Right ventricle myocardium inferior (tissue), 1 donor: ENCODE measurements at regions of chr18 and their contacts with region 1.

Region 1: DNA sequence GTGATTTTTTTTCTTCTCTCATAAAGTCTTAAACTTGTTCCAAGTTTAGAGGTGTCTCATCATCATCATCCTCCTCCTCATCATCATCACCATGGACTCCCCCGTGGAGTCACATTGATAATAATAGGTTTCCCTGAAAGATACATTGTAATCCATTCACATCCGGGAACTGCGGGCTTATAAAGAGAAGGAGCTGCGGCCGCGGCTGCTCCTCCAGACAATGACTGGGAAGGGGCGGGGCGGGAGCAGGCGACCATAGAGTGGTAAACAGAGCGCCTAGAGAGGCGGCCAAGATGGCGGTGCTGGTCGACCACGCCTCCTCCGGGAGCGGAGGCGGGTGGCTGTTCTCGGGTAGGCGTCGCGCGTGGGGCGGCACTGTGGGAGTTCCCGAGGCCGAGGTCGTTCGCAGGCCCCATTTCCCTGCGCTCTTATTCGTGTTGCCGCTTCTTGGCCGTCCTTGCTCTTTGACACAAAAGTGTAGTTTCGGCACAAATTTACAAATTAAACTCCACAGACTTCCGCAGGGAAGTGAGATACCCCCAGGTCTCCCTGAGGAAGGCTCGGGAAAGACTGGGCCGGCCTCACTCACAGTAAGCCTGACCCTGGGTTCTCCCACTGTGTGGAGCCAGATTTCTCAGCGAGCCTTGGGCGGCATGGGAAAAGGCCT is 1.8 kb upstream of the TCF4 start:
- DNase-seq: peak; percentile 99
- ATAC-seq: peak; percentile 98

Region 2: DNA sequence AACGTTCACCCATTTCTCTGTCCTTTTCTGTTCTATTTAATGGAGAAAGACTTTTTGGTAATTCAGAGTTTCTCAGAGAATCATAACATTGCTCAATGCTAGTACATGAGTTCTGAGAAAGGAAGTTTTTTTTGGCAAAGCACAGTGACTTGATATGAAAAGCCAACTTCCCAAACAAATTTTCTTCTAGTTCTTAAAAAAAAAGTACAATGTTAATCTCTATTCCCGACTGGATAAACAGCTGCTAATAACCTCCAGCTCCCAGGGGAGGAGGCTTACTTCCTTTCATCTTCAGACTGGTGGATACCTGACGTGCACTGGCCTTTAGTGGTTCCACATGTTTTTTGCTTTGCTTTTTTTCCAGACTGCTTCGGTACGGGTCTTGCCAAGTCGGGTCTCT is 345.9 kb before region 1 on chr18:
- intact Hi-C with region 1: loop called (anchors 5 kb)
- DNase-seq: no peak
- ATAC-seq: peak; percentile 78

Region 3: GRCh38 chr18:55337908-55338521 is 251.7 kb before region 1 on chr18:
- intact Hi-C with region 1: loop called (anchors 5 kb)
- DNase-seq: no peak
- ATAC-seq: peak; percentile 79

Region 4: GRCh38 chr18:55422456-55423180 is 167.1 kb before region 1 on chr18:
- intact Hi-C with region 1: loop called (anchors 2 kb)
- DNase-seq: no peak
- ATAC-seq: peak; percentile 63

Region 5: DNA sequence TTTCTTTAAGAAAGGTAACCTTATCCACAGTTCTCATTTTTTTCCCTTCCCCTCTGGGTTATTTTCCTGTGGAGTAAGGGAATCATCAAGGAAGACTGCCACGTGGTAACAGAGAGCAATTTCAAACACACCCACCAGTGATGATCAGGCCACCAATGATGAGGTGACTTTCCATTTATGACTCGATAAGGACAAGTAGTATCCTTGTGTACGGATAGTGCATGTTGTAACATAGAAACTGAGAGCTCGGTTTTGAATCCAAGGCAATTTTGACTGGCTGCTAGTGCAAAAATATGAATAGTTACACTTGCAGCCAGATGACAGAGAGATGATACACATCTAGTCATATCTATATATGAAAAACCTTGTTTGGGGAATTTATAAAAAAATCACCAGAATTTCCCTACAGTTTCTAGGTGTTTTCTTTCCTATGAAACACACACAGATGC is 141.9 kb after region 1 on chr18:
- intact Hi-C with region 1: loop called (anchors 5 kb)
- DNase-seq: no peak
- ATAC-seq: no peak

Region 6: DNA sequence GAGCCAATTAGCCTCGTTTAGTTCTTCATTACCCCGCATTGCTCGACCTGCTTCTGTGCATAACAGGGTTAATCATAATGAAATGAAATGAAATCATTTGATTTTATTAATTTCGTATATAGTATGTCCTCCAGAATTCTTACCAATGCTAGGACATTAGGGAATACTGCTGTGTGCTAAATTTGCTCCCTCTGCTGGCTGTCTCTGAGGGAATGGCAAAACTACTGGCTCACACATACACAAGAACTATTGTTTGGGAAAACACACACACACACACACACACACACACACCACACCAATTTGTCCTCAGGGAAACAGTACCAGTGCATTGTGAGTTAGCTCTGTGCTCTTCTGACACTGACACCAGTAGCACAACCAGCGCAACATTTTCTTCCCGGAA is 271.5 kb after region 1 on chr18:
- intact Hi-C with region 1: loop called (anchors 10 kb)
- DNase-seq: no peak
- ATAC-seq: no peak